ENCODE measurements at regions of chr12 and their contacts with region 1.

Region 1: GRCh38 chr12:46131729-46132469 is 136.9 kb downstream of the SLC38A1 start:
- DNase-seq: no peak

Region 2: GRCh38 chr12:46364777-46365580 is 233.1 kb after region 1 on chr12:
- intact Hi-C with region 1: loop called (anchors 10 kb)
- DNase-seq: peak in 2 of 10 donors; percentile 22 to 49

Measured in posterior cingulate gyrus (tissue), 11 donors.